ENCODE measurements at regions of chr1 and their contacts with region 1.

Region 1: DNA sequence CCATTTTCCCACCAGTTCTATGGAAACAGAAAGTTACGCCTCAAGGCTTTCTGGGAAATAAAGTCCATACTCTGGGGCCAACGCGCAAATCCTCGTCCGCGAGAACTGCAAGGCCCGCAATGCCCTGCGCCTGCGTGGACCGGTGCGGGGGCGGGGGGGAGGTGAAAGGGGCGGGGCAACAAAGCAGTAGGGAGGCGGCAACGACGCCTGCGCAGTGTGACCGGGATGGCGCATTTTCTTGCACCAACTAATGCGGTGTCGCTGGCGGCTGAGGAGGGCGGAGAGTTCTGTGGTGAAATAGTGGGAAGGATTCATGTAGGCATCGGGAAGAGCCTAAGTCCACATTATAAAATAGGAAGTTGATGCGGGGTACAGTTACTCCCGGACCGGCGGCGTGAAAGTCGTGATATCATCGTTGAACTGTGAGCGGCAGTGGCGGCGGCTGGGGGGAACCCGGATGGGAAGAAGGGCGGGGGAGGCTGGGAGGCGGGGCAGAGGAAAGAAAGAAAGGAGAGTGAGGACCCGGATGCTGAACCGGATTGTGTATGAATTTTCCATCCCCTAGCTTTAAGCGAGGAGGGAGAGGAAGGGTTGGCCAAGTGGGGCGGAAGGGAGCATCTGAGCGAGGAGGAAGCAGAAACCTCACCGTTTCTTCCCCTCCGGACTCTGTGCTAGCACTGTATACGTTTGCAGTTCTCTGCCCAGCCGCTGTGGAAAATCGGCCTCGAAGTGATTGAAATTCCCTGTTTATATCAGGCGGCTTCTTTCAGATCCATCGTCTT is at the start of gene GGPS1:
- DNase-seq: peak; percentile 99
- H3K4me3 ChIP-seq: peak within 1 kb of the TSS; percentile 80 to 98 (median 90)
- H3K27ac ChIP-seq: peak within 1 kb of the TSS; percentile 97 to 98 (median 98)
- H3K4me1 ChIP-seq: peaks cover 6 to 67% (median 62%) of the 10 kb centered on the region in 4 donors
- H3K27me3 ChIP-seq: no peaks in the 10 kb centered on the region
- CTCF ChIP-seq: peak in 2 of 4 experiments; percentile 18 to 37
- EP300 ChIP-seq: no peak
- POLR2A ChIP-seq: peak; percentile 91 to 95
- total RNA-seq, gene GGPS1: 29.5 to 35.7 (median 30.8) TPM

Region 2: GRCh38 chr1:235160957-235161684 is 167.4 kb before region 1 on chr1 and contains the start of gene RBM34:
- intact Hi-C with region 1: loop called (anchors 2 kb)
- DNase-seq: peak; percentile 95
- H3K4me3 ChIP-seq: peak within 1 kb of the TSS; percentile 64 to 82 (median 76)
- H3K27ac ChIP-seq: peak within 1 kb of the TSS; percentile 89 to 91 (median 90)
- H3K4me1 ChIP-seq: peaks cover 0 to 31% (median 20%) of the 10 kb centered on the region in 4 donors
- H3K27me3 ChIP-seq: no peaks in the 10 kb centered on the region
- CTCF ChIP-seq: peak in 2 of 4 experiments; percentile 26 to 30
- EP300 ChIP-seq: no peak
- POLR2A ChIP-seq: peak; percentile 98 to 99
- total RNA-seq, gene RBM34: 46.4 to 83.9 (median 51.8) TPM

Region 3: GRCh38 chr1:235253219-235253962 is 75.2 kb before region 1 on chr1:
- intact Hi-C with region 1: loop called (anchors 5 kb)
- DNase-seq: peak; percentile 80
- H3K4me3 ChIP-seq: no peak overlapping the region
- H3K27ac ChIP-seq: no peak overlapping the region
- H3K4me1 ChIP-seq: peaks cover 0 to 10% (median 0%) of the 10 kb centered on the region in 4 donors
- H3K27me3 ChIP-seq: no peaks in the 10 kb centered on the region
- CTCF ChIP-seq: peak; percentile 50 to 83 (median 72)
- EP300 ChIP-seq: no peak
- POLR2A ChIP-seq: no peak

Region 4: GRCh38 chr1:235270625-235271024 is 57.9 kb before region 1 on chr1:
- intact Hi-C with region 1: loop called (anchors 5 kb)
- DNase-seq: no peak
- H3K4me3 ChIP-seq: peak overlapping the region in 1 of 4 donors; percentile 8
- H3K27ac ChIP-seq: peak overlapping the region in 3 of 4 donors; percentile 6 to 41 (median 22)
- H3K4me1 ChIP-seq: peaks cover 0 to 61% (median 43%) of the 10 kb centered on the region in 4 donors
- H3K27me3 ChIP-seq: no peaks in the 10 kb centered on the region
- CTCF ChIP-seq: peak in 1 of 4 experiments; percentile 25
- EP300 ChIP-seq: no peak
- POLR2A ChIP-seq: no peak

Region 5: DNA sequence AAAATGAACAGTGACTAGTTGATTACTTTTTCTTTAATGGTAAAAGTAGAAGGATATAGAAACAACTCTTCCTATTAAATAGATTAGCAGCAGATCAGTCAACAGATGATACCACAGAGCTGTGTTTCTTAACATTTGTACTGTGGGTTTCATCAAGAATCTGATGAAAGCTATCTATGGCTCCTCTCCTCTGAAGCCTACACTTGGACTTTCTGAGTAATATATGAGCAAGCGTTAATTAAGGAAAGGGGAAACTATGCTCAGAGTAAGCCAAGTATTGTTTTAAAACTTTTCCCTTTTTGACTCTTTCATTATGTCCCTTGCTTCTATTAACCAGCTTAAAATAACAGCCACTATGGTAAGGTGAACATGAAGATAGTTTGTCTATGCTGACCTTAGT is 11.4 kb before region 1 on chr1:
- intact Hi-C with region 1: no loop called
- DNase-seq: no peak
- H3K4me3 ChIP-seq: no peak overlapping the region
- H3K27ac ChIP-seq: no peak overlapping the region
- H3K4me1 ChIP-seq: peaks cover 0 to 49% (median 37%) of the 10 kb centered on the region in 4 donors
- H3K27me3 ChIP-seq: no peaks in the 10 kb centered on the region
- CTCF ChIP-seq: no peak
- EP300 ChIP-seq: no peak
- POLR2A ChIP-seq: no peak

Region 6: DNA sequence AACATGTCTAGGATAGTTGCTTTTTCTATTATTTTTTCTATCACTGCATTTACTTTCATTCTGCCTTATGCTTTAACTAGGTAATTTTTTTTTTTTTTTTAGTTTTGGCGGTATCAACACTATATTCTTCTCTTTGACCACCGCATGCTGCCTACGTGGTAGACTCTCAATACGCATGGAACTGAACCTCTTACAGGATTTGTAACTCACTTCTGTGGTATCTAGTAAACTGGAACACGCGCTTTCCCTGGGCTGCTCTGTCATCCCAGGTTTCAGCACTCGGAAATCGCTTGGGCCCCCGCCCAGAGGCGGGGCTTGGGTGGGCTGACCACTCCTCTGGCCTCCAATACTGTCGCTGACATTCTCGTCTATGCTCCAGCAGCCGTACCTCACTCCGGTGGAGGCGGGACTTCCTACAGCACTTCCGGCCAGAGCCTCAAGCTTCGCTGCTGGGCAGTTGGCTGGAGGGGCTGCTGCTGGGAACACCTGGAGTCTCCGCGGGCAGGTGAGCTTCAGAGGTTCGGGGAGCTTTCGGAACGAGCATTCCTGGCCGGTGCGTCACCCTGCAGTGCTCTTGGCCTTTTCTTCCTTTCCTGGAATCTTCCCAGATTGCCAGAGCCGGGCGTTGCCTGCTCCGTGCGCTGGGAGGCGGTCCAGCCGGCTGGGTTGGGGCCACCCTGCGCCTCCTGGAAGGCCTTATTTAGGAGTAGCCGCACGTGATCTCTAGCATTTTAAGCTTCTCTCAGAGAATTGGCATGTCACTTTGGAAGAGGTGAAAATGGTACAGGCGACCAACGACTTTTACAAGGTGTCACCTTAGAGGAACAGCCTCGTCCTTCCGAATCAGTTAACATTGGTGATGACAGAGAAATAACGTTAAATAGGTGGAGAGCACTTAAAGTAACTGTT is 38.7 kb after region 1 on chr1 and contains the start of gene TBCE:
- intact Hi-C with region 1: loop called (anchors 1 kb)
- DNase-seq: peak; percentile 98
- H3K4me3 ChIP-seq: peak within 1 kb of the TSS; percentile 60 to 75 (median 64)
- H3K27ac ChIP-seq: peak within 1 kb of the TSS; percentile 77 to 85 (median 81)
- H3K4me1 ChIP-seq: peaks cover 0 to 7% (median 6%) of the 10 kb centered on the region in 4 donors
- H3K27me3 ChIP-seq: no peaks in the 10 kb centered on the region
- CTCF ChIP-seq: no peak
- EP300 ChIP-seq: no peak
- POLR2A ChIP-seq: peak in 1 of 2 donors; percentile 77
- total RNA-seq, gene TBCE: 16.3 to 21.9 (median 17.7) TPM

Region 7: DNA sequence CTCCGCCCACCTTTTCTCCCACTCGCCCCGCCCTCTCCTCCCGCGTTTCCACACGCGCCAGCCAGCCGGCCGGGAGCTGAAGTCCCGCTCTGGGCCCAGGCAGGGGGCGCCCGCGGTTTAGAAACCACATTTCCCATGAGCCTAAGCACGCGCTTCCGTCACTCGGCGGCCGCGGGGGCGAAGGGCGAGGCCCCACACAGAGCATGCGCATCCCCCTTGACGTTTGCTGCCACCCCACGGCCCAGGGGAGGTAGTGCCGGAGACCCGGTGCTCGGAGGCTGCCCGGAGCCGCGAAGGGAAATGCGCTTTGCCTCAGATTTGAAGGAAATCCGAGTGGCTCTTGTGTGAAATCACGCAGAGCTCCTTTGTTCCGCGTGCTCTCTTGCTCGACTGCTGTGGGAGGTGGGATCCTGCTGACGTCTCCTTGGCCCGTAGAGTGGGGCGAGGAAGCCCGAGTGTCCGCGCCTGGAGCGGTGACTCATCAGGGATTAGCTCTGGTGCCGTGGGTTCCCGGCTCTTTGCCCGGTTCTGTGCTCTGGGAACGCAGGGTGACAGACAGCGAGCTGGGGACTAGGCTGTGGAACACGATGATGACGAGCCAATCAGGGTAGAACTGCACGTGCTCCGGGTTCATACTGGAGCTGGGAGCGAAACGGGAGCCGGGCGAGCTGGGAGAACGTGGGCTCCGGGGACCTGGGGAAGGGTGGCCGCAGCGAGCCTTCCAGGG is 176.1 kb after region 1 on chr1:
- intact Hi-C with region 1: loop called (anchors 5 kb)
- DNase-seq: peak; percentile 100
- H3K4me3 ChIP-seq: peak overlapping the region; percentile 73 to 92 (median 84)
- H3K27ac ChIP-seq: peak overlapping the region; percentile 98 to 100 (median 100)
- H3K4me1 ChIP-seq: peaks cover 0 to 29% (median 16%) of the 10 kb centered on the region in 4 donors
- H3K27me3 ChIP-seq: no peaks in the 10 kb centered on the region
- CTCF ChIP-seq: peak; percentile 78 to 94 (median 86)
- EP300 ChIP-seq: peak in 2 of 4 donors; percentile 44 to 95
- POLR2A ChIP-seq: peak; percentile 32 to 64

Region 8: GRCh38 chr1:235739124-235739523 is 410.6 kb after region 1 on chr1:
- intact Hi-C with region 1: no loop called
- DNase-seq: no peak
- H3K4me3 ChIP-seq: no peak overlapping the region
- H3K27ac ChIP-seq: no peak overlapping the region
- H3K4me1 ChIP-seq: peaks cover 0 to 3% (median 0%) of the 10 kb centered on the region in 4 donors
- H3K27me3 ChIP-seq: no peaks in the 10 kb centered on the region
- CTCF ChIP-seq: no peak
- EP300 ChIP-seq: no peak
- POLR2A ChIP-seq: no peak

Region 9: GRCh38 chr1:235791532-235792060 is 463.0 kb after region 1 on chr1:
- intact Hi-C with region 1: no loop called
- DNase-seq: no peak
- H3K4me3 ChIP-seq: no peak overlapping the region
- H3K27ac ChIP-seq: no peak overlapping the region
- H3K4me1 ChIP-seq: no peaks in the 10 kb centered on the region
- H3K27me3 ChIP-seq: no peaks in the 10 kb centered on the region
- CTCF ChIP-seq: no peak
- EP300 ChIP-seq: no peak
- POLR2A ChIP-seq: no peak

Measured in sigmoid colon (tissue), 7 donors.